ENCODE measurements at regions of chr6 and their contacts with region 1.

Region 1: DNA sequence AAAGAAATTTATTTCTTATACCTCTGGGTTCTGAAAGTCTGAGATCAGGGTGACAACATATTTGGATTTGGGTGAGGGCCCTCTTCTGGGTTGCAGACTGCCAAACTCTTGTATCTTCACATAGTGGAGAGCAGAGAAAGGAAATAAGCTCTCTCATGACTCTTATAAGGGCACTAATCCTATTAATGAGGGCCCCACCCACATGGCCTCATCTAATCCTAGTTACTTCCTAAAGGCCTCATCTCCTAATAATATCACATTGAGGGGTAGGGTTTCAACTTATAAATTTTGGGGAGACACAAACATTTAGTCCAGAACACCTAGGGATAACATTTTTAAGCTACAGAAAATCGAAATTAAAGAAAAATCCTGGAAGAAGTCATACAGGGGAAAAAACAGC is 5.1 kb upstream of the ZNF391 start:
- DNase-seq: no peak
- H3K4me3 ChIP-seq: no peak overlapping the region
- H3K27ac ChIP-seq: no peak overlapping the region
- H3K4me1 ChIP-seq: peaks cover 8% of the 10 kb centered on the region; the same call in 1 of the 2 replicates
- H3K27me3 ChIP-seq: no peaks in the 10 kb centered on the region
- CTCF ChIP-seq: no peak

Region 2: GRCh38 chr6:27359231-27359630 is 24.2 kb before region 1 on chr6:
- CTCF ChIA-PET with region 1: interaction called, 14 read pairs
- POLR2A ChIA-PET with region 1: no interaction called
- intact Hi-C with region 1: no loop called
- DNase-seq: no peak
- H3K4me3 ChIP-seq: no peak overlapping the region
- H3K27ac ChIP-seq: no peak overlapping the region
- H3K4me1 ChIP-seq: no peaks in the 10 kb centered on the region
- H3K27me3 ChIP-seq: no peaks in the 10 kb centered on the region
- CTCF ChIP-seq: no peak

Measured in PC-9 (cell line).